Dorsolateral prefrontal cortex (tissue), 120 donors: ENCODE measurements at regions of chr19 and their contacts with region 1.

Region 1: DNA sequence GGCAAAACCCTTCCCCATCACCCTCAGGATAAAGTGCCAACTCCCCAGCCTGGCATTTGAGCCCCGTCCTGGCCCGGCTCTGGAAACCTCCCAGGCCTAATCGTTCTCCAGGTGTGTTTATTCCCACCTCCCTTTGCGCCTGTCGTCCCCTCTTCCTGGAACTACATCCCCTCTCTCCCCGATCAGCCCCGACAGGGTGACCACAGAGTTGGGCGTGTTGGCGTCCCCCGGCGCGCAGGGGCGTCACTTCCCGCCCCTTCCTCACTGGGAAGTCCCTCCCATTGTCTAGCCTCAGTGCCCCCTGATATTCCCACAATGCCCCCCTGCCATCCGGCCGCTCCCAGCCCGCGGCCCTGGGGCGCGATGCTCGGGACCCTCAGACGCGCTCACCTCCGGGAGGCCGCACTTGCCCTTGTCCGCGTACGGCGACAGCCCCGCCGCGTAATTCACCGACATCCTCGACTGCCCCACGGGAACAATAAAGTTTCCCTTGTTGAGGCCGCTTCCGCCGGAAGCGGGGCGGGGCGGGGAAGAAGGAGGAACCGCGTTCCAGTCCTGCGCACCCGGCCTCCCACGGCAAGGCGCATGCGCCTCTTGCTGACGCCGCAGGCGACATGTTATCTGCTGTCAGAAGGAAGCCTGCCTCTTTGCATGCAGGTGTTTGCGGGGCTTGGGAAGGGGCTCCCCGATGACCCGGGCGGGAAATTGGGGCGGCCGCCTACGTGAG is at the starts of genes ANKRD24 and SIRT6:
- DNase-seq: peak; percentile 93 to 98 (median 97)
- H3K4me3 ChIP-seq: peak within 1 kb of the TSS; percentile 61 to 100 (median 92)
- H3K27ac ChIP-seq: peak within 1 kb of the TSS in 57 of 59 donors; percentile 9 to 95 (median 84)
- H3K27me3 ChIP-seq: no peaks in the 10 kb centered on the region
- CTCF ChIP-seq: peak in 37 of 56 donors; percentile 4 to 63 (median 30)
- total RNA-seq, gene ANKRD24: 15.8 to 64.8 (median 32.6) TPM
- total RNA-seq, gene SIRT6: 13.5 to 37.9 (median 21.8) TPM

Region 2: GRCh38 chr19:3642987-3643673 is 539.1 kb before region 1 on chr19:
- intact Hi-C with region 1: no loop called
- DNase-seq: no peak
- H3K4me3 ChIP-seq: no peak overlapping the region
- H3K27ac ChIP-seq: peak overlapping the region in 27 of 59 donors; percentile 15 to 93 (median 58)
- H3K27me3 ChIP-seq: no peaks in the 10 kb centered on the region
- CTCF ChIP-seq: no peak

Region 3: DNA sequence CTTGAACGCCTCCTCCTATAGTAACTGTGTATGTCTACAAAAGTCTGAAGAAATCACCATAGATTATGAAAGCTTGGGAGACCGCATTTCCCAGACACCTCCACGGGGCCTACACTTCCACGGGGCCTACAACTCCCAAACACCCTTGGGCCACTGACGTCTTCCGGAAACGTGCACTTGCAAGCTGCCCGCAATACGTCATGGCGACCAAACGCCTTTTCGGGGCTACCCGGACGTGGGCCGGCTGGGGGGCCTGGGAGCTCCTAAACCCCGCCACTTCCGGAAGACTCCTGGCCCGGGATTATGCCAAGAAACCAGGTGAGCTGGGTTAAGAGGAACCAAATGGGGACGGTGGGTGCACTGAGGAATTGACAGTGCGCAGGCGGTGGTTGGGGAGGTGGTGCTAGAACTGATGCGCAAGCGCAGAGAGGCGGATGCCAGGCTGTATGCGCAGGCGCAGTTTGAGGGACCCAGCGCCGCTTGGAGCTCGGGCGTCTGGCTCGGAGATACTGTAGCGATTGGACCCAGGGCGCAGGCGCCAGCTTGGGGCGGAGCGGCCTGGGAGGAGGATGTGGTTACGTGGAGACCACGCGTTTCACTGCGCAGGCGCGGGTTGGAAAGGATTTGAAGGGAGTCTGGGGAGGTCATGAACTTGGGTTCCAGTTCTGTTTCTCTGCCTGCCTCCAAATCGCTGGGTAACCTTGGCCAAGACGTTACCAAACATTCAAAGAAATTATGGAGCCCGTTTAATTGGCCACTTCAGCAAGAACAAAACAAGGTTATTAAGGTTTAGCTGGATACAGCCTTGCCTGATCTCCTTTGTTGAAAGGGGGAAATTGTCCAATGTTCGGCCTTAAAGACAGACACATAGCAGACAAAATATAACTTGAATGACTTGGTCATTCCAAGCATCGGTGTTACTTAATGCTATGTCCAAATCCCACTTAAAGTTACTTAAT is 419.5 kb before region 1 on chr19 and contains the start of gene MRPL54:
- intact Hi-C with region 1: loop called in 1 of 2 experiments (anchors 5 kb)
- DNase-seq: peak; percentile 96 to 99 (median 98)
- H3K4me3 ChIP-seq: peak within 1 kb of the TSS; percentile 64 to 100 (median 97)
- H3K27ac ChIP-seq: peak within 1 kb of the TSS; percentile 78 to 100 (median 99)
- H3K27me3 ChIP-seq: no peaks in the 10 kb centered on the region
- CTCF ChIP-seq: peak in 33 of 56 donors; percentile 2 to 49 (median 19)
- total RNA-seq, gene MRPL54: 21.6 to 65.1 (median 45.6) TPM

Region 4: GRCh38 chr19:3852614-3853254 is 329.5 kb before region 1 on chr19:
- intact Hi-C with region 1: no loop called
- DNase-seq: no peak
- H3K4me3 ChIP-seq: no peak overlapping the region
- H3K27ac ChIP-seq: no peak overlapping the region
- H3K27me3 ChIP-seq: no peaks in the 10 kb centered on the region
- CTCF ChIP-seq: no peak

Region 5: DNA sequence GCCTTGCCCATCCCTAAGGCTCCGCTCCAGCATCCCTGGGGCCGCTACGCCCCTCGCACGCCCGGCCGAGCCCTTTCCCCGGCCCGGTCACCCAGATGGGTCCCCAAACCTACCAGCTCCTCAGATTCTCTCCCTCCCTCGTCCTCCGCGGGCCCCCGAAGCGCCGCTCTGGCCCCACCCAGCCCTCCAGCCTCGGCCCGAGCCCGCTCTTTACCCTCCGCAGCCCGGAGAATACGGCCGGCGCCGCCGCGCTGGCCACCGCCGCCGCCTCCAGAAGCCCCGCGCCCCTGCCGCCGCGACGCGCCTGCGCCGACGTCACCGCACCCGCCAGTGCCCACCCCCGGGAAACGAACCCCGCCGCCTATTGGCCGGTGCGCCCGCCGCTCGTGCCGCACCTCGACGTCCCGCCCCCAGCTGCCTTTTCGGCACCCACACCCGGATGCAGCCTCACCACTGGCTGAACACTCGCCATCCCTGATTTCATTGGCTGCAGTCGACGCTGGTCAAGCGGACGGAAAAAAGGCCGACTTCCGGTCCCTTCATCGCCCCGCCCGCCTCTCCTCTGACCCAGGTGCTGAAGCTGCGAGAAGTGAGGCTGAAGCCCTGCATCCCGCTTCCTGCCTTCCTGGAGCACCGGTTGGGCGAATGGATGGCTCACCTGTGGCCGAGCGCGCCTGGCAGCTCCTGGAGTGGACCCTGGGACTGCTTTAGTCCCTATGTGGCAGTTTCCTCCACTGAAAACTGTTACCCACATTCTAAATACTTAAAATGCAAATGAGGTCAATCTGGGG is 211.2 kb before region 1 on chr19 and contains the start of gene DAPK3:
- intact Hi-C with region 1: loop called in 1 of 2 experiments (anchors 5 kb)
- DNase-seq: peak; percentile 94 to 99 (median 98)
- H3K4me3 ChIP-seq: peak within 1 kb of the TSS; percentile 49 to 99 (median 88)
- H3K27ac ChIP-seq: peak within 1 kb of the TSS in 57 of 59 donors; percentile 43 to 97 (median 85)
- H3K27me3 ChIP-seq: no peaks in the 10 kb centered on the region
- CTCF ChIP-seq: peak in 42 of 56 donors; percentile 9 to 67 (median 40)
- total RNA-seq, gene DAPK3: 47.9 to 98.2 (median 67.8) TPM

Region 6: DNA sequence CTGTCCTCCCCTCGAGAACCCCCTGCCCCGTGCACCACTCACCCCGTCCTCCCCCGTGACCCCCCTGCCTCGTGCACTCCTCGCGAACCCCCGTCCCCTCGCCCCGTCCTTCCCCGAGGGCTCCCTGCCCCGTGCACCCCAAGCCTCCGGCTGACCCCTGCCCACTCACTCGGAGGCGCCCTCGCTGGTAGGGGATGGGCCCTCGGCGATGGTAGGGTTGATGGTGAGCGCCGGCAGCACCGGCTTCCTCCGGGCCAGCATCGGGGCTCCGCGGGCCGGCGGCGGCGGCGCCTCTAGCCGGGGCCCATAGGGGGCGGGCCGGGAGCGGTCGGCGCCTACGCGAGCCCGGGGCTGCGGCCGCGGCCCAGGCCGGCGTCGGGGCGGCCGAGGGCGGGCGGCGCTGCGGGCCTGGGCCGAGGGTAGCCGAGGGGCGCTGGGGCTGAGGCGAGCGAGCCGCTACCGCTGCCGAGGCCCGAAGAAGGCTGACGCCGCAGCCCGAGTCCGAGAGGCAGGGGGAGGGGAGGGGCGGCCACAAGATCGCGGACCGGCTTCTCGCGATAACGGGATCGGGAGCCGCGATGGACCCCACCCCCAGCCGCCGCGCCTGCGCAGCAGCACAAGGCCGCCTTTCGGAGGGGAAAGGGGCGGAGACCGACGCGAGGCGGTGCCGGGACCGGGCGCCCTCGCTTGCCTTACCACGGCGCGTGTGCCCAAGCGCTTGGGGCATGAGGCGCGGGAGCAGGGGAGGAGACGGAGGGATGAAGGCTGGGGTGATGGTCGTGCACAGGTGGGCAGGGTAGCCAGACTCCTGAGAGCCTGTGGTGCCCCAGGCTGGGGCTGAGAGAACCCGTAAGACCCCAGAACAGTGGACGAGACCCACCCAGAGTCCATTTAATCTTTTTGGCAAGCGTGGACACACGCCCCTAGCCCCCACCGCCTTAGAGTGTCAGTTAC is 58.4 kb before region 1 on chr19 and contains the start of gene MAP2K2:
- intact Hi-C with region 1: loop called in 1 of 2 experiments (anchors 2 kb)
- DNase-seq: peak; percentile 87 to 98 (median 94)
- H3K4me3 ChIP-seq: peak within 1 kb of the TSS; percentile 55 to 87 (median 72)
- H3K27ac ChIP-seq: peak within 1 kb of the TSS in 57 of 59 donors; percentile 25 to 96 (median 85)
- H3K27me3 ChIP-seq: no peaks in the 10 kb centered on the region
- CTCF ChIP-seq: peak in 37 of 56 donors; percentile 9 to 65 (median 31)
- total RNA-seq, gene MAP2K2: 118 to 197 (median 143) TPM

Region 7: DNA sequence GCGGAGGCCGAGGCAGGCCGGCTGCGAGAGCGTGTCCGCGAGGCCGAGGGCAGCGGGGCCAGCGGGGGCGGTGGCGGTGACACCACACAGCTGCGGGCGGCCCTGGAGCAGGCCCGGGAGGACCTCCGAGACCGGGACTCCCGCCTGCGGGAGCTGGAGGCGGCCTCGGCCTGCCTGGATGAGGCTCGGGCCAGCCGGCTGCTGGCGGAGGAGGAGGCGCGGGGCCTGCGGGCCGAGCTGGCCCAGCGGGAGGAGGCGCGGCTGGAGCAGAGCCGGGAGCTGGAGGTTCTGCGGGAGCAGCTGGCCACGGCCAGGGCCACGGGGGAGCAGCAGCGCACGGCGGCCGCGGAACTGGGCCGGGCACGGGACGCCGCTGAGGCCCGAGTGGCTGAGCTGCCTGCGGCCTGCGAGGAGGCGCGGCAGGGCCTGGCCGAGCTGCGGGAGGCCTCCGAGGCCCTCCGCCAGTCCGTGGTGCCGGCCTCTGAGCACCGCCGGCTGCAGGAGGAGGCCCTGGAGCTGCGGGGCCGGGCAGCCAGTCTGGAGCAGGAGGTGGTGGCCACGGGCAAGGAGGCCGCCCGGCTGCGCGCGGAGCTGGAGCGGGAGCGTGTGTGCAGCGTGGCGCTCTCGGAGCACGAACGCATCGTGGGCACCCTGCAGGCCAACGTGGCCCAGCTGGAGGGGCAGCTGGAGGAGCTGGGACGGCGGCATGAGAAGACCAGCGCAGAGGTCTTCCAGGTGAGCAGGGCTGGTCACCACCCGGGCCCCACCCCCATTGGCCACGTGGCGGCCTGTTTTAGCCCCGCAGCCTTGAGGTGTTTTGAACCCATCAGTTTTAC is 35.4 kb after region 1 on chr19:
- intact Hi-C with region 1: no loop called
- DNase-seq: no peak
- H3K4me3 ChIP-seq: no peak overlapping the region
- H3K27ac ChIP-seq: no peak overlapping the region
- H3K27me3 ChIP-seq: no peaks in the 10 kb centered on the region
- CTCF ChIP-seq: no peak